Dendritic cell treated with granulocyte-macrophage colony-stimulating factor and Interleukin-4, amounts not matched to agents 40 ng/mL and 50 ng/mL, for 4 days (primary cell): ENCODE measurements at regions of chr4 and their contacts with region 1.

Region 1: DNA sequence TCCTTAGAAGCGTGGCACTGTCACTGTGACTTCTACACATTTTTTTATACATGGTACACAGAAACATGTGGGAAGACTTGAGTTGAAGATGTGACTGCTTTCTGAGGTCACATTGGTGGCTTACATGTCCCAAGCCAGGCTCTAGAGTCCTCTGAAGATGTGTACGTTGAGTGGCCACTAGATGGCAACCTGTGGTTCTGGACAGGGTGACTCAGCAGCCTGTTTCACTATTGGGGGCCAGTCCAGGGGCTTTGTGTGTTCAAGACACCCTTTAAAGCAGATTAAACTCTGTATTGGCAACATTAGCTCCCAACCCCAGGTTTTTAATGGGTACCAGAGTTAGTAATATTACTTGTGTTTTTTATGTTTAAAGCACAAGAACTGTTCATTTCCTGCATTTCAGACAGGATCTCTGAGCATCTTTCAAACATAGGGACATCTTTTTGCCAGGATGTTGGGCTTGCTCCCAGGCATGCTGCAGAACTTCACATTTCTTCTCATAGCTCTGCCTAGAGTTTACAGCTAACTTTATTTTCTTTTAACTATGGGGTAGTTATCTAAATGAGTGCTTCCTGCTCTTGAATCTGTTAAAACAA is 53.0 kb downstream of the DCUN1D4 start:
- H3K4me3 Mint-ChIP-seq: no peak overlapping the region
- H3K27ac Mint-ChIP-seq: no peak overlapping the region
- H3K4me1 Mint-ChIP-seq: peaks cover 14% of the 10 kb centered on the region
- H3K27me3 Mint-ChIP-seq: no peaks in the 10 kb centered on the region

Region 2: DNA sequence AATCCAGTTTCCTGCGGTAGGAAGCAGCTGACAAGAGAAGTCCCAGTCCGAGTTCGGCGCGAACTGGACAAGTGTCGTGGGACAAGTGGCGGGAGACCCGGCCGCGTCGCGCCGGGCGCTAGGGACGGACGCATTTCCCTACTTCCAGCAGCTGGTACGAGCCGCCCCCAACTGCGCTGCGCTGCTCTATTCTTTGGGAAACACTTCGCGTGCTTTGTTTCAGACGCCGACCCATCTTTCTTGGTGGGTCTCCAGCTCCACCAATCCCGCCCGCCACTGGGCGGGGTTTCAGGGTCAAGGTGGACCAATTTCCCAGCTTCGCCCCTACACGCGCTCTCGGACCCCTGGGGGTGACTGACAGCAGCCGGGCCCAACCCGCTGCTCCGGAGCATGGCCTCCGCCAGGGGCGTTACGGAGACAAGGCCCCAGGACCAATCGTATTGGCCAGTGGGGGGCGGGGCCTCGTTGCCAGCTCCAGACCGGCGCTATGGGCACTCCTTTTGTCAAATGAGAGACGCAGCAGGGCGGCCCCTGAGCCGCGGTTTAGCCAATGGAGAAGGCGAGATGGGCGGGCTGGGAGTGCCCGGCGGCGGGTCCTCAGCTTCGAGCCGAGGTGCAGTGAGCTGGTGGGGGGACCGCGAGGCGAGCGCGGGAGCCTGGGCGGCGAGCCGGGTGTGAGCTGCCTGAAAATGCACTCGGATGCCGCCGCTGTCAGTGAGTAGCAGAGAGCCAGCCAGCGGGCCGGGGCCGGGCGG is 53.2 kb before region 1 on chr4 and contains the start of gene DCUN1D4:
- intact Hi-C with region 1: loop called (anchors 5 kb)
- H3K4me3 Mint-ChIP-seq: peak within 1 kb of the TSS; percentile 93
- H3K27ac Mint-ChIP-seq: peak within 1 kb of the TSS; percentile 86
- H3K4me1 Mint-ChIP-seq: peaks cover 17% of the 10 kb centered on the region
- H3K27me3 Mint-ChIP-seq: peaks cover 13% of the 10 kb centered on the region

Region 3: GRCh38 chr4:51870441-51871188 is 25.3 kb before region 1 on chr4:
- intact Hi-C with region 1: no loop called
- H3K4me3 Mint-ChIP-seq: no peak overlapping the region
- H3K27ac Mint-ChIP-seq: no peak overlapping the region
- H3K4me1 Mint-ChIP-seq: no peaks in the 10 kb centered on the region
- H3K27me3 Mint-ChIP-seq: no peaks in the 10 kb centered on the region

Region 4: DNA sequence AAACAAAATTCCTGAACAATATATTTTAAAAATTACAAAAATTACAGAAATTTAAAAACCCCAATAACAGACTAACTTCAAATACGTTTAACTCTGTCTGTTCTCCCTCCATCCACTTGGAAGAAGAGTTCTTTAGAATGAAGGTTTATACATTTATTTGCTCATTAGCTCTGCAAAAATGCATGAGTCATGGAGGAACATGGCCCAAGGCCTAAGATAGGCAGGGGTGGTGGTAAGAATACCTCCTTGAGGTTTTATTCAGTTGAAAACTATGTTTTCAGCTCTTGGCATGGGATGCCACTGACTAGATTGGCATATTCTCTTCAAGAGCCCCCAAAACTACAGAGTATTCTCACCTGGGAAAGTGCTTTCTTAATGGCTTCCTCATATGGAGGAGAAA is 133.1 kb after region 1 on chr4:
- intact Hi-C with region 1: loop called (anchors 2 kb)
- H3K4me3 Mint-ChIP-seq: no peak overlapping the region
- H3K27ac Mint-ChIP-seq: no peak overlapping the region
- H3K4me1 Mint-ChIP-seq: peaks cover 11% of the 10 kb centered on the region
- H3K27me3 Mint-ChIP-seq: no peaks in the 10 kb centered on the region